PC-9 (cell line): ENCODE measurements at regions of chr2 and their contacts with region 1.

Region 1: GRCh38 chr2:31413862-31414550 is 536 bp downstream of the XDH start:
- DNase-seq: no peak
- H3K4me3 ChIP-seq: peak overlapping the region; percentile 48
- H3K27ac ChIP-seq: peak overlapping the region; percentile 85
- H3K4me1 ChIP-seq: peaks cover 52% of the 10 kb centered on the region
- H3K27me3 ChIP-seq: no peaks in the 10 kb centered on the region
- CTCF ChIP-seq: peak; percentile 73

Region 2: GRCh38 chr2:31384351-31384750 is 29.7 kb before region 1 on chr2:
- CTCF ChIA-PET with region 1: no interaction called
- POLR2A ChIA-PET with region 1: no interaction called
- intact Hi-C with region 1: loop called (anchors 1 kb)
- DNase-seq: peak in 1 of 2 experiments; percentile 92
- H3K4me3 ChIP-seq: peak overlapping the region; percentile 22; the same call in 1 of the 2 replicates
- H3K27ac ChIP-seq: peak overlapping the region; percentile 98
- H3K4me1 ChIP-seq: peaks cover 46% of the 10 kb centered on the region
- H3K27me3 ChIP-seq: no peaks in the 10 kb centered on the region
- CTCF ChIP-seq: no peak

Region 3: GRCh38 chr2:31401580-31401979 is 12.4 kb before region 1 on chr2:
- CTCF ChIA-PET with region 1: interaction called, 4 read pairs
- POLR2A ChIA-PET with region 1: interaction called, 12 read pairs
- intact Hi-C with region 1: no loop called
- DNase-seq: peak; percentile 83 to 99
- H3K4me3 ChIP-seq: no peak overlapping the region
- H3K27ac ChIP-seq: peak overlapping the region; percentile 86
- H3K4me1 ChIP-seq: peaks cover 35% of the 10 kb centered on the region
- H3K27me3 ChIP-seq: no peaks in the 10 kb centered on the region
- CTCF ChIP-seq: no peak

Region 4: GRCh38 chr2:31429759-31430438 is 15.9 kb after region 1 on chr2:
- CTCF ChIA-PET with region 1: no interaction called
- POLR2A ChIA-PET with region 1: no interaction called
- intact Hi-C with region 1: loop called (anchors 2 kb)
- DNase-seq: peak; percentile 73 to 86
- H3K4me3 ChIP-seq: 0 out of 2 replicates have a peak overlapping the region, but pooled peaks have one; percentile 4
- H3K27ac ChIP-seq: peak overlapping the region; percentile 72
- H3K4me1 ChIP-seq: peaks cover 30% of the 10 kb centered on the region
- H3K27me3 ChIP-seq: no peaks in the 10 kb centered on the region
- CTCF ChIP-seq: no peak

Region 5: DNA sequence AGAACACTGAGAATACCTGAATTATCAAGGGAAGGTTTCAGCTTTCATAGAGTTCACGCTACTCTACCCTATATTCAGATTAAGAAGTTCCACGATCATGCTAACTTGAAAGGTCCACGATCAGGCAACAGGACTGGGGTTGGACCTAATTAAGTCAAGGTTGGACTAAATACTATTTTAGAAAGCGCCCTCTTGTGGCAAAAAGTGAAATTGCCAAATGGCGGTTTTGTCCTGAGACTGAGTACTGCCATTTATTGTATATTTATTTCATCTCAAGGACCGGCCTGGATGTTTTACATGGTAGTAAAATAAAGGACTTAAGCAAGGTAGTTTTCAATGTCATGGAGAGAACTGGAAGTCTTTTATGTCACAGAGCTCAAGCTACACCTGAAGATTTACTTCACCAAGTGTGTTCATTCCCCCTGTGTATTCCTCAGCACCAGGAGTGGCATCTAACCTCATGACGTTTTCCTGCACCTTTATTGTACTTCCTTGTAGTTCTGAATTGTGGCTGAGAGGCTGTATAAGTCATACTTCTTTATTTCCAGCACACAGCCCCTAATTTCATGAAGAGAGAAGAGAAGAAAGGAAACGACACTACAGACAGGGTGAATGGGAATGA is 110.0 kb after region 1 on chr2:
- CTCF ChIA-PET with region 1: interaction called, 3 read pairs
- POLR2A ChIA-PET with region 1: no interaction called
- intact Hi-C with region 1: loop called (anchors 1 kb)
- DNase-seq: peak; percentile 42 to 45
- H3K4me3 ChIP-seq: no peak overlapping the region
- H3K27ac ChIP-seq: no peak overlapping the region
- H3K4me1 ChIP-seq: no peaks in the 10 kb centered on the region
- H3K27me3 ChIP-seq: no peaks in the 10 kb centered on the region
- CTCF ChIP-seq: peak; percentile 96